Posterior vena cava (tissue), 2 donors: ENCODE measurements at regions of chr2 and their contacts with region 1.

Region 1: GRCh38 chr2:217291252-217291651 is 431.4 kb upstream of the TNP1 start:
- DNase-seq: no peak

Region 2: GRCh38 chr2:217261452-217261851 is 29.8 kb before region 1 on chr2:
- intact Hi-C with region 1: loop called in 1 of 2 experiments (anchors 1 kb)
- DNase-seq: no peak